PC-9 (cell line): ENCODE measurements at regions of chr9 and their contacts with region 1.

Region 1: DNA sequence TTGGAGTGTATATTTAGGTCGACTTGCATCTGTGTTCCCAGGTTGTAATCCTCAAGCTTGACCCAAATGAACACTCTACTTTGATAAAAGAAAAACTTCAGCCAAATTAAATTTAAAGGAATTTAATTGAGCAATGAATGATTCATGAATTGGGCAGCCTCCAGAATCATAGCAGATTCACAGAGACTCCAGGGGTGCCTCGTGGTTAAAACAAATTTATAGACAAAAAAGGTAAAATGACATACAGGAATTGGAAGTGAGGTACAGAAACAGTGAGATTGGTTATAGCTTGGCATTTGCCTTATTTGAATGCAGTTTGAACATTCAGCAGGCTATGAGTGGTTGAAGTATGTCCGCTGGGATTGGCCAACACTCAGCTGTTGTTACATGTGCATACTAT is 21.6 kb upstream of the SPATA31D4 start:
- DNase-seq: peak in 1 of 2 experiments; percentile 37
- H3K4me3 ChIP-seq: no peak overlapping the region
- H3K27ac ChIP-seq: no peak overlapping the region
- H3K4me1 ChIP-seq: no peaks in the 10 kb centered on the region
- H3K27me3 ChIP-seq: no peaks in the 10 kb centered on the region
- CTCF ChIP-seq: no peak

Region 2: DNA sequence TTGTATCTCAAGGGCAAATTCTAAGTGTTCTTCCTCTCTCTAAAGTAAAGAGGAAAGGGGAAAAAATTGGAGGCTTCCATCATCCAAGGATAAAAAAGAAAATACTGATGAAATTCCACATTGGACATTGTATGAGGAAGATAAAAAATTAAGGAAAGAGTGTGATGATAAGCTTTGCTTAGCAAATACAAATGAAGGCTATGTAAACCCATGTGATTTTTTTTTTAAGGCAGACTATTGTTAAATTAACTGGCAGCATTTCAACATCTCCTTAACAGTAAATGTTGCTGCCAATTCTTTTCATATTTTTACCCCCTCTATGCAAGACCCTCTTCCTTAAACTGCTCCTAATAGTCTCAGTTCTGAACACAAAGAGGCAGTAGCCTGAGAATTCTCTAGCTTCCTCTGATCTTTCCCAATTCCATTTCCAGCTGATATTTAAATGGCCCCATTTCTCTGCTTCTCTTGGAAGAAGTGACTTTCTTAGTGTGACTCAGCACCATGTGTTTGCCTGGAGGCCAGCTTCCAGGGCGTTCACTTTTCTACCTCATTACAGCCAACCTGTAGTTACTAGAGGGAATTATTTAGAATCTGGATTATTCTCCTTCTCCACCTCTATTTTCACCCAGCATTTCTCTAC is 377.0 kb before region 1 on chr9:
- CTCF ChIA-PET with region 1: no interaction called
- POLR2A ChIA-PET with region 1: no interaction called
- intact Hi-C with region 1: no loop called
- DNase-seq: peak; percentile 53 to 81
- H3K4me3 ChIP-seq: no peak overlapping the region
- H3K27ac ChIP-seq: peak overlapping the region; percentile 52
- H3K4me1 ChIP-seq: peaks cover 23% of the 10 kb centered on the region
- H3K27me3 ChIP-seq: no peaks in the 10 kb centered on the region
- CTCF ChIP-seq: no peak

Region 3: GRCh38 chr9:82829818-82830217 is 923.1 kb after region 1 on chr9:
- CTCF ChIA-PET with region 1: no interaction called
- POLR2A ChIA-PET with region 1: interaction called, 13 read pairs
- intact Hi-C with region 1: no loop called
- DNase-seq: no peak
- H3K4me3 ChIP-seq: no peak overlapping the region
- H3K27ac ChIP-seq: no peak overlapping the region
- H3K4me1 ChIP-seq: no peaks in the 10 kb centered on the region
- H3K27me3 ChIP-seq: no peaks in the 10 kb centered on the region
- CTCF ChIP-seq: no peak